Dorsolateral prefrontal cortex (tissue), 120 donors: ENCODE measurements at regions of chr17 and their contacts with region 1.

Region 1: GRCh38 chr17:79612468-79613194 is 1.8 kb upstream of the RBFOX3 start:
- DNase-seq: peak; percentile 40 to 92 (median 78)
- H3K4me3 ChIP-seq: no peak overlapping the region
- H3K27ac ChIP-seq: peak overlapping the region in 45 of 59 donors; percentile 5 to 96 (median 64)
- H3K27me3 ChIP-seq: peaks cover 0 to 88% (median 35%) of the 10 kb centered on the region in 45 donors
- CTCF ChIP-seq: peak; percentile 35 to 79 (median 64)

Region 2: DNA sequence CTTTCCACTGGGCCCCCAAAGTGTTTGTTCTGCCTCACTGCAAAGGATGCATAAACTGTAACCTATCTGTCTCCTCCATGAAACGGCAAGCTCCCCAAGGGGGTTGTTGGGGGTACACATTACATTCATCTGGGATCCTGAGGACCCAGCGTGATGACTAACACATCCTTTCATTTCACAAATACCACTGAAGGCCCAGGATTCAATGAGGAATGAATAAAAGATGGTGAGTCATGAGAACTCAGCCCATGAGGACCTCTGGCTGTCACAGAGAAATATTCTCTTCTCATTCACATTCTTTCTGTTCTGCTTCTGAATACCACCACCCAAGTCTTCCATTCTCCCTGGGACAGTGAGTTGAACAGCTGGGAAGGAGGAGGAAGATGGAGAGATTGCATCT is 151.6 kb before region 1 on chr17:
- intact Hi-C with region 1: loop called (anchors 5 kb)
- DNase-seq: no peak
- H3K4me3 ChIP-seq: no peak overlapping the region
- H3K27ac ChIP-seq: peak overlapping the region in 5 of 59 donors; percentile 4 to 93 (median 59)
- H3K27me3 ChIP-seq: peaks cover 0 to 10% (median 0%) of the 10 kb centered on the region in 45 donors
- CTCF ChIP-seq: no peak

Region 3: GRCh38 chr17:79563237-79564013 is 49.2 kb before region 1 on chr17:
- intact Hi-C with region 1: loop called in 1 of 2 experiments (anchors 5 kb)
- DNase-seq: no peak
- H3K4me3 ChIP-seq: no peak overlapping the region
- H3K27ac ChIP-seq: peak overlapping the region in 31 of 59 donors; percentile 6 to 92 (median 67)
- H3K27me3 ChIP-seq: peaks cover 0 to 31% (median 0%) of the 10 kb centered on the region in 45 donors
- CTCF ChIP-seq: no peak

Region 4: DNA sequence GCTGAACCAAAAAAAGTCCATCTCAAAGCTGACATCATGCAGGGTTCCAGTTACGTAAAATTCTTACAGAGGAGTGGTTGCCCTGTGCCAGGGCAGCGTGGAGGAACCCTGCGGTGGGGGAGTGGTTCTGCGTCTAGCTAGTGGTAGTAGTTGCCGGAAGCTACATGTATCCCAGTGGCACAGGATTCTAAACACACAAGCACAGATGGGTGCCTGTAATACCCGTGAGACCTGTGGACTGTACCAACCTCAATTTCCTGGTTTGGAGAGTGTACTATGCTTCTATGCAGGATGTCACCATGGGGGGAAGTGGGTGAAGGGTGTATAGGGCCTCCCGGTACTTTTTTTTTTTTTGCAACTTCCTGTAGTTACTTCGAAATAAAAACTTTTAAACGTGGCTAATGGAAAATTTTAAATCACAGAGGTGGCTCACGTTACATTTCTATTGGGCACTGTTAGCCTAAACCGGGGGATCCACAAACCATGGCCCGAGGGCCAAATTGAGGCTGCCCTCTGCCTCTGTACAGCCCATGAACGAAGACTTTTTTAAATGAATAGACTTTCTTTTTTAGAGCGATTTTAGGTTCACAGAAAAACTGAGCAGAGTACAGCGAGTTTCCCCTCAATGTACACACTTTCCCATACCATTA is 384.5 kb after region 1 on chr17:
- intact Hi-C with region 1: no loop called
- DNase-seq: no peak
- H3K4me3 ChIP-seq: no peak overlapping the region
- H3K27ac ChIP-seq: no peak overlapping the region
- H3K27me3 ChIP-seq: no peaks in the 10 kb centered on the region
- CTCF ChIP-seq: no peak